Mammary epithelial cell (primary cell): ENCODE measurements at regions of chr6 and their contacts with region 1.

Region 1: DNA sequence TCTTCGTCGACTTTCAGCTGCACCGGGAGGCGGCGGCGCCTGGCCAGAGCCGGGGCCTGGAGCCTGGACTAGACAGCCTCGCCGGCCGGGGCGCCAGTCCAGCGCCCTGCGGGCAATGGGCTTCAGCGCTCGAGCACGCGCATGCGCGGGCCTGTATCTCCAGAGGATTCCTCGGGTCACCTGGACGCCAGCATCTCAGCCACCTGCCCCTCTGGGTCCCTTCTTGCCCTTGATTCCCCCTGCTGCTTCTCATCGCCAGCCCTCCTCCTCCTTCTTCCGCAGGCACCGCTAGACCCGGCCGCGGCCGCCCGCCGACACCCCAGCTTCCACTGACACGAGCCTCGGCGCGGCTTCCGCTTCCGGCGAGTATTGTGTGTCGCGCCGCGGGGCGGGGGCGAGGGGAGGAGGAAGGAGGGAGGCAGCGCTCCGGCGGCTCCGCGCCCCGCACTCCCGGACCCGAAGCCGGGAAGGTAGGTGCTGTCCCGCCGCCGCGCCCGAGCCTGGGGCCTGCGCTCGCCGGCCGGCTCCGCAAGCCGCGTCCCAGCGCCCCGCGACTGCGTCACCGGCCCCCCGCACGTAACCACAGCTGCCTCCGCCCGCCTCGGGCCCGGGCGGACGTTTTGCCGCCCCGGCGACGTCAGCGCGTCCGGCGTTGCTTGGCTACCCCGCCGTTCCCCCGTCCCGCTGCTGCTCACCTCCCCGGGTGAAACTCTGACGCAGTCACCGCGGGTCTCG is at the start of gene TRIM39:
- DNase-seq: peak; percentile 93
- H3K4me3 ChIP-seq: peak within 1 kb of the TSS; percentile 66 to 70 (median 69)
- H3K27ac ChIP-seq: peak within 1 kb of the TSS; percentile 95
- H3K4me1 ChIP-seq: peaks cover 19% of the 10 kb centered on the region
- H3K27me3 ChIP-seq: no peaks in the 10 kb centered on the region
- CTCF ChIP-seq: no peak
- total RNA-seq, gene TRIM39: 13.3 to 14.0 TPM

Region 2: DNA sequence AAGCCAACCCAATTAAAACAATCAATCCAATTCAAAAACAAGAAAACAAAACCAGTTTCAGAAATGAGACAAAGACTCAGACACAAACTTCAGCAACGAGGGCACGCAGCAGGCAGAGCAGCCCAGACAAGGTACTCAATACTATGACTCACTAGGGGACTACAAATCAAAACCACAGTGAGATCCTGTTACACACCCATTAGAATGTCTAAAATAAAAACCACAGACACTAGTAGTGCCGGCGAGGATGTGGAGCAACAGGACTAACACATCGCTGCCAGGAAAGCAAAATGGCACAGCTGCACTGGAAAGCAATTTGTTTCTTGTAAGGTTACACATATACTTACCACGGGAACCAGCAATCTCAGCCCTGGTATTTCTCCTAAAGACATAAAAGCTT is 810.6 kb before region 1 on chr6:
- CTCF ChIA-PET with region 1: no interaction called
- dilution Hi-C with region 1: no loop called
- in situ Hi-C with region 1: no loop called
- intact Hi-C with region 1: no loop called
- DNase-seq: peak; percentile 93
- H3K4me3 ChIP-seq: no peak overlapping the region
- H3K27ac ChIP-seq: no peak overlapping the region
- H3K4me1 ChIP-seq: no peaks in the 10 kb centered on the region
- H3K27me3 ChIP-seq: no peaks in the 10 kb centered on the region
- CTCF ChIP-seq: no peak

Region 3: DNA sequence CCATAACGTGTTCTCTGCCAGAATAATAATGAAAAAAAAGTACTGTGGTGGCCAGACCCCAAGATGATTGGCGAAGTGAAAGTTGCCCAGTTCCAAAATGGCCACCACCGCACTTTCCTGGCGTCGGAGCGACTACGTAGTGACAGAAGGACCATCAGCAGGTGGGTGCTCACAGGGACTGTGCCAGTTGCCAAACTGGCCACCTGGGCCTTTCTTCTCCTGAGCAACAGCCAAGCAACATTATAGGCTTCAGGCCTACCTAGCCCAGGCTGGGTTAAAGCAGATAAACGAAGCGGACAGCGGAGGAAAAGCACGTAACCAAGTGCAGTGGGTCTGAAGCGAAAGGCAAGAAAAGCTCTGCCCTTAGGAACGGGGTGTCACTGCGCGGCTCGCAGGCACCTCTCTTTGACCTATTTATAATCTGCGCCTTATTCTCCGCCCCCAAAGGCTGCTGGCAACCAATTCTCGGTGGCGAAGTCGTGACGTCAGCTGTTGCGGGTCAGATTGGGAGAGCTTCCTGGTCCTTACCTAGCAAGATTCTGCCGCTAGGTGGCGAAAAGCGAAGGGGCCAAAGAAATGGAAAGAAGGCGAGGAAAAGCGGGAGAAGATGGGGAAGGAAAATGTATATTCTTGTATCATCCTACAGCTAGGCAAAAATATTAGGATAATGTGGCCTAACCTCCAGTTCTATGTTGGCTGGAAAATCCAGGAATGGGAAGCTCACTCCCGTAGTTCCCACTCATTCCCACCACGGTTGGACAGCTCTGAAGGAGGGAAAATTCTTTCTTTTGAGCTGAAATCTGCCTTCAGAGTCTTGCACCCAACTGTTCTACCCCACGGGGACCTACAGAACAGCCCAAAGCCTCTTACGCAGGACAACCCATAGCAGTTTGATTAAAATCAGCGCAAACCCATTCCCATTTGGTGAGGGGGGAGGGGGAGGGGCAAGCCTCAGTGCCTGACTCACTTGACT is 676.7 kb before region 1 on chr6:
- CTCF ChIA-PET with region 1: interaction called, 13 read pairs
- dilution Hi-C with region 1: no loop called
- in situ Hi-C with region 1: no loop called
- intact Hi-C with region 1: no loop called
- DNase-seq: peak; percentile 96
- H3K4me3 ChIP-seq: peak overlapping the region; percentile 57 to 60 (median 59)
- H3K27ac ChIP-seq: peak overlapping the region; percentile 68
- H3K4me1 ChIP-seq: peaks cover 6% of the 10 kb centered on the region
- H3K27me3 ChIP-seq: no peaks in the 10 kb centered on the region
- CTCF ChIP-seq: peak; percentile 93 to 98

Region 4: GRCh38 chr6:30066577-30067459 is 259.9 kb before region 1 on chr6 and contains the start of gene PPP1R11:
- CTCF ChIA-PET with region 1: no interaction called
- dilution Hi-C with region 1: no loop called
- in situ Hi-C with region 1: no loop called
- intact Hi-C with region 1: loop called (anchors 10 kb)
- DNase-seq: peak; percentile 100
- H3K4me3 ChIP-seq: peak within 1 kb of the TSS; percentile 57 to 93 (median 60)
- H3K27ac ChIP-seq: peak within 1 kb of the TSS; percentile 86
- H3K4me1 ChIP-seq: peaks cover 30% of the 10 kb centered on the region
- H3K27me3 ChIP-seq: no peaks in the 10 kb centered on the region
- CTCF ChIP-seq: no peak
- total RNA-seq, gene PPP1R11: 26.3 to 43.2 TPM

Region 5: DNA sequence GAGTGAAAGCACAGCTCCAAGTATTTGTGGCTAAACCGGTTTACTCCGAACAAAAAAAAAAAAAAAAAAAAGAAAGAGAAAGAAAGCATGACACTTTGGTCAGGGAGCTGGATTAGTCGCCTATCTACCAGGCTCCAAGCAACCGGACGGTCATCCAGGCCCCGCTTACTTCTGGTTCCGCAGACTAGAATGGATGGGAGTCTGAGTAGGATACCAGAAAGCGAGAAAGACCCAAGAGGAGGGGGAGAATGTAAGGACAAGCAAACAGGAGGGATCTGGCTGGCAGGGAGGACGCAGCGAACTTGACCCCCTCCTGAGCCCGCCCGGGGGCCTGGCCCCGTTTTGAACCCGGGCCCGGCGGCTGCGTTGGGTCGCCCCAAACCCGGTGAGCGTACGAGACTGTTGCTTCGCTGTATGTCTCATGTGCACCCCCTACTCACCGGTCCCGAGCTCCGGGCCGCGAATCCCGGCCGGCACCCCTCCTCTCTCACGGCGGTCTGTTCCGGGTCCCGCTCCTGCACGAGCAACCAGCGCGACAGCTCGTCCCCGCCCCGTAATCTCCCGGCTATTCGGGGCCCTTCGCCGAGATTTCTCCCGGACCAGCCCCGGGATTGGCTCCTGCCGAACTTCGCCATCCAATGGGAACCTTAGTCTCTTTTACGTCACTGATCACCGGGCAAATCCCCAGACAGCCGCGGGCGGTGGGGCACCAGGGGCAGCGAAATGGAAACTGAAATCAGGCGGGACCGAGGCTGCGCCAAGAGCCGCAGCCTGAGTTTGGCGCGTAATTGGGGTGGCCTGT is 113.6 kb before region 1 on chr6 and contains the start of gene TRIM26:
- CTCF ChIA-PET with region 1: no interaction called
- dilution Hi-C with region 1: no loop called
- in situ Hi-C with region 1: no loop called
- intact Hi-C with region 1: loop called (anchors 2 kb)
- DNase-seq: peak; percentile 97
- H3K4me3 ChIP-seq: peak within 1 kb of the TSS; percentile 78 to 94 (median 90)
- H3K27ac ChIP-seq: peak within 1 kb of the TSS; percentile 94
- H3K4me1 ChIP-seq: peaks cover 26% of the 10 kb centered on the region
- H3K27me3 ChIP-seq: no peaks in the 10 kb centered on the region
- CTCF ChIP-seq: no peak
- total RNA-seq, gene TRIM26: 37.8 to 57.3 TPM

Region 6: GRCh38 chr6:30259140-30260035 is 67.3 kb before region 1 on chr6:
- CTCF ChIA-PET with region 1: no interaction called
- dilution Hi-C with region 1: no loop called
- in situ Hi-C with region 1: no loop called
- intact Hi-C with region 1: loop called (anchors 2 kb)
- DNase-seq: peak; percentile 88
- H3K4me3 ChIP-seq: peak overlapping the region; percentile 69 to 90 (median 75)
- H3K27ac ChIP-seq: peak overlapping the region; percentile 72
- H3K4me1 ChIP-seq: peaks cover 16% of the 10 kb centered on the region
- H3K27me3 ChIP-seq: no peaks in the 10 kb centered on the region
- CTCF ChIP-seq: peak; percentile 10 to 47

Region 7: DNA sequence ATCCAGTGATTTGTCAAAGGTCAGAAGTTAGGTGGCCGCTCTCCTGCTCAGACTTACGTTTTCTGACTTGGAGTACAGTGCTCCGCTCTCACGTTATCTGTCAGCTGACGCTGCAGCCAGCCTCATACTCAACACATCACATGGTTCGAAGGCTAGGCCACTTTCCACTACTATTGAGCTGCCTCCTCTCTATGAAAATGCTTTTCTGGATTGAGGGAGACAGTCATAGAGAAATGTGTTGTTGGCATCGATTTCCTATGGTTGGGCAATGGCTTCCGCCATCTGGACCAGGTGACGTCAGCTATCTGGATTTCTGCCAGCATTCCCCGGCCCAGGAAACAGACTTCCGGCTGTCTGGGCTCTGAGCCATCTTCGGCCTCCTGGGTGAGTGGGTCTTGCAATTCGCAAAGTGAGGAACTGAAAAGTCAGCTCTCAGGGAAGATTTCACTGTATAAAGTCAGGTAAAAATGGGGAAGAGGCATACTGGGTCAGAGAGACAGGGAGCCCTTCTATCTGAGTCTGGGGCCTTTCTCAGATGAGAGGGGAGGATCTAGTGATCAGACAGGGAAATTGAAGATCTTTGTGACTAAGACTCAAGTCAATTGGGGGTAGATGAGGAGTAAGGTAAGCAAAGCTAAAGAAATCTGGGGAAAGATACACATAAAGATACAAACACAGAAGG is 455.2 kb after region 1 on chr6:
- CTCF ChIA-PET with region 1: no interaction called
- dilution Hi-C with region 1: no loop called
- in situ Hi-C with region 1: no loop called
- intact Hi-C with region 1: no loop called
- DNase-seq: peak; percentile 97
- H3K4me3 ChIP-seq: no peak overlapping the region
- H3K27ac ChIP-seq: peak overlapping the region; percentile 97
- H3K4me1 ChIP-seq: peaks cover 36% of the 10 kb centered on the region
- H3K27me3 ChIP-seq: no peaks in the 10 kb centered on the region
- CTCF ChIP-seq: no peak